Left ventricle myocardium inferior (tissue), 1 donor: ENCODE measurements at regions of chr18 and their contacts with region 1.

Region 1: GRCh38 chr18:31722369-31722957 is 38.1 kb upstream of the B4GALT6 start:
- DNase-seq: peak; percentile 65
- H3K4me3 ChIP-seq: no peak overlapping the region
- H3K27ac ChIP-seq: no peak overlapping the region
- H3K4me1 ChIP-seq: peaks cover 43% of the 10 kb centered on the region
- H3K27me3 ChIP-seq: no peaks in the 10 kb centered on the region
- CTCF ChIP-seq: peak; percentile 91

Region 2: GRCh38 chr18:31563778-31564177 is 158.7 kb before region 1 on chr18:
- intact Hi-C with region 1: loop called (anchors 10 kb)
- DNase-seq: no peak
- H3K4me3 ChIP-seq: no peak overlapping the region
- H3K27ac ChIP-seq: no peak overlapping the region
- H3K4me1 ChIP-seq: peaks cover 8% of the 10 kb centered on the region
- H3K27me3 ChIP-seq: no peaks in the 10 kb centered on the region
- CTCF ChIP-seq: peak; percentile 31

Region 3: DNA sequence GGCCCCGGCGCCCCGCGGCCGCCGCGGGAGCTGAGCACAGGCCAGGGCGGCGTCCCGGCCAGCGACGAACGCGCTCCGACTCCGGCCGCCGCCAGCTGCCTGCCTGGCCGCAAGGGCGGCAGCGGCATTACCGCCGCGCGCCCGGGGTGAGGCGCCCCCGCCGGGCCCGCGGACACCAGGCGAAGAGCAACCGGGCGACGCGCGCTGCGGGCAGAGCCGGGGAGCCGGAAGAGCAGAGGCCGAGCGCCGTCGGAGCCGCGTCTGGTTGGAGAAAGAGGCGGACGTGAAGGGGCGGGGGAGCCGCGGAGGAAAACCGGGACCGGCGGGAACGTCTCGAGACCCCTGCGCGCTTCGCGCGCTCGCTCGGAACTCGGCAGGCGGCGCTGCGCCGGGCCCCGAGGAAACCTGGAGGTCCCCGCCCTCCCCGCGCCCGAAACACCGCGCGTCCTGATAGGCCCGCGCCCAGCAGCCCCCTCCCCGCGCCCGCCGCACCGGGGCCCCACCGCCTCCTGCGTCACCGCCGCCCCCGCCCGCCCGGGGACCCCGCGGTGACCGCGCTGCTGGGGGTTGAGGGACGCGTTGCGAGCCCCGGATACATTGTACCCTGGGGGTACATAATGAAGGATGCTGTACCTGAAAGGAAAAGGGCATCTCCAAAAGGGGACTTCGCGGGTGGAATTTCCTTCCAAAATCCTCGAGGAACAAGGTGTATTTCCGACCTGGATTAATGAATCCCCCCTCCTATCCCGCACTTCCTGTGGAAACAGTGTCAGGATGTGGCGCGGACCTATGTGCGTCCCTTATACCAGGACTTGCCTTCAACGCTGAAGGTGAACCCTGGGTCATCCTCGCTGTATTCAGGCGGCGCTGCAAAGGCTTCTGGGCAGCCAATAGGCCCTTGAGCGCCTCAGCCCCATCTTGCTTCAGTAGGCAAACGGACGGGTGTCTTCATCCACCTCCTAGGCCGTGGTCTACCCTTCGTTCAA is 37.1 kb before region 1 on chr18:
- intact Hi-C with region 1: loop called (anchors 5 kb)
- DNase-seq: peak; percentile 64
- H3K4me3 ChIP-seq: peak overlapping the region; percentile 73
- H3K27ac ChIP-seq: peak overlapping the region; percentile 80
- H3K4me1 ChIP-seq: peaks cover 24% of the 10 kb centered on the region
- H3K27me3 ChIP-seq: no peaks in the 10 kb centered on the region
- CTCF ChIP-seq: peak; percentile 56